Activated CD4-positive, alpha-beta T cell treated with anti-CD3 and anti-CD28 coated beads for 36 hours (primary cell): ENCODE measurements at regions of chr5 and their contacts with region 1.

Region 1: GRCh38 chr5:169805527-169805934 is 168.5 kb downstream of the DOCK2 start:
- DNase-seq: peak; percentile 82
- ATAC-seq: peak; percentile 90
- H3K4me3 Mint-ChIP-seq: peak overlapping the region; percentile 38
- H3K27ac Mint-ChIP-seq: peak overlapping the region; percentile 98
- H3K4me1 Mint-ChIP-seq: peaks cover 51% of the 10 kb centered on the region
- H3K27me3 Mint-ChIP-seq: no peaks in the 10 kb centered on the region

Region 2: GRCh38 chr5:168822745-168823281 is 982.7 kb before region 1 on chr5:
- CTCF ChIA-PET with region 1: no interaction called
- POLR2A ChIA-PET with region 1: no interaction called
- intact Hi-C with region 1: loop called in 1 of 2 experiments (anchors 5 kb)
- DNase-seq: peak; percentile 71
- ATAC-seq: peak; percentile 88
- H3K4me3 Mint-ChIP-seq: peak overlapping the region; percentile 58
- H3K27ac Mint-ChIP-seq: peak overlapping the region; percentile 94
- H3K4me1 Mint-ChIP-seq: peaks cover 36% of the 10 kb centered on the region
- H3K27me3 Mint-ChIP-seq: peaks cover 6% of the 10 kb centered on the region

Region 3: GRCh38 chr5:169656125-169656901 is 149.2 kb before region 1 on chr5:
- CTCF ChIA-PET with region 1: no interaction called
- POLR2A ChIA-PET with region 1: no interaction called
- intact Hi-C with region 1: loop called (anchors 2 to 5 kb)
- DNase-seq: peak; percentile 40
- ATAC-seq: peak; percentile 59
- H3K4me3 Mint-ChIP-seq: no peak overlapping the region
- H3K27ac Mint-ChIP-seq: peak overlapping the region; percentile 79
- H3K4me1 Mint-ChIP-seq: peaks cover 67% of the 10 kb centered on the region
- H3K27me3 Mint-ChIP-seq: no peaks in the 10 kb centered on the region

Region 4: DNA sequence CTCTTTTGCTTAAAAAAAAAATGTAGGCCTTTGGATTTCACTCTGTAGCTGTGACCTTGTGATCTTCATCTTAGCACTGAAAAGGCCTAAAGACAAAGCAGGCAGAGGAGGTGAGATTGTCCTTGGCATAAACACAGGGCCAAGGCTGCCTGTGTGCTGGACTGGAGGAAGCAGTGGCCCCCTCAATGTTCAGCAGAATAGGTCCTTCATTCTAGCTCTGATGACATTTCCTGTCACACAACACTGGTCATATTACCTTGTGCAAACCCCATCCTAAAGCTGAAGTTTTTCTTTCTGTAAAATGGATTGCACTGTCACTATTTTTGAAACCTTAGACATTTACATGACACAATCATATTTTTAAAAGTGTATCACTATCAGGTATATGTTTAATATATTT is 27.3 kb after region 1 on chr5:
- CTCF ChIA-PET with region 1: interaction called, 3 read pairs
- POLR2A ChIA-PET with region 1: interaction called, 3 read pairs
- intact Hi-C with region 1: loop called in 1 of 2 experiments (anchors 2 kb)
- DNase-seq: no peak
- ATAC-seq: no peak
- H3K4me3 Mint-ChIP-seq: no peak overlapping the region
- H3K27ac Mint-ChIP-seq: peak overlapping the region; percentile 21
- H3K4me1 Mint-ChIP-seq: peaks cover 29% of the 10 kb centered on the region
- H3K27me3 Mint-ChIP-seq: no peaks in the 10 kb centered on the region